ENCODE measurements at regions of chr15 and their contacts with region 1.

Region 1: GRCh38 chr15:79349525-79349924 is 38.6 kb downstream of the TMED3 start:
- DNase-seq: peak; percentile 33
- H3K4me3 ChIP-seq: no peak overlapping the region
- H3K27ac ChIP-seq: peak overlapping the region in 1 of 2 experiments; percentile 35; a peak in 1 of 4 replicates
- H3K4me1 ChIP-seq: peaks cover 0 to 6% of the 10 kb centered on the region in 2 experiments; a peak in 1 of 4 replicates
- H3K27me3 ChIP-seq: no peaks in the 10 kb centered on the region
- CTCF ChIP-seq: no peak
- EP300 ChIP-seq: no peak
- RAD21 ChIP-seq: no peak

Region 2: DNA sequence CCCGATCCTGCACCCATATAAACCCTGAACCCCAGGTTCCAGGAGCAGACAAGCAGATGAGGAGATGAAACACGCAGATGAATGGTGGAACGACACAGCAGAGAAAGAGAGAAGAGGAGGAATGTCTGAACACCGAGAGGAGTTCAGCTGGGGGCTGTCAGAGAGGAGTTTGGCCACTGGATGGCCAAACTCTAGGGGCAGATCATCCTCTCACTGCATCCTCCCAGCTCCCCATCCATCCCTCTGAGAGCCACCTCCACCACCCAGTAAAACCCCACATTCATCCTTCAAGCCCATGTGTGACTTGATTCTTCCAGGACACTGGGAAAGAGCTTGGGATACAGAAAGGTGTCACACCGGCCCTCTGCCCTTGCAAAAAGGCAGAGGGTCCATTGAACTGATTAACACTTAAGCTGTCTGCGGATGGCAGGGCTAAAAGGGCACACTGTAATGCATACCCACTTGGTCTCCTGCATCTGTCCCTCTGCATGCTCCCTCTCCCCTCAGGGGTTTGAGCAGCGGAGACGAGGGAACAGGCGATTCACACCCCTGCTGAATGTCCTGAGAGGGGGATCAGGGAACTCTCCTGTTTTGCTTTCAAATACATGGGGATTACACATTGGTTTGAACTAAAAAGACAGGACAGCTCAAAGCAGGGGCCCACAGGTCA is 15.2 kb after region 1 on chr15:
- CTCF ChIA-PET with region 1: interaction called, 10 read pairs
- POLR2A ChIA-PET with region 1: no interaction called
- DNase-seq: peak; percentile 26
- H3K4me3 ChIP-seq: no peak overlapping the region
- H3K27ac ChIP-seq: peak overlapping the region; percentile 41 to 63; a peak in 2 of 4 replicates
- H3K4me1 ChIP-seq: peaks cover 10 to 24% of the 10 kb centered on the region in 2 experiments; a peak in 2 of 4 replicates
- H3K27me3 ChIP-seq: no peaks in the 10 kb centered on the region
- CTCF ChIP-seq: no peak
- EP300 ChIP-seq: no peak
- RAD21 ChIP-seq: no peak

Measured in SK-N-SH (cell line).